ENCODE measurements at regions of chr1 and their contacts with region 1.

Region 1: DNA sequence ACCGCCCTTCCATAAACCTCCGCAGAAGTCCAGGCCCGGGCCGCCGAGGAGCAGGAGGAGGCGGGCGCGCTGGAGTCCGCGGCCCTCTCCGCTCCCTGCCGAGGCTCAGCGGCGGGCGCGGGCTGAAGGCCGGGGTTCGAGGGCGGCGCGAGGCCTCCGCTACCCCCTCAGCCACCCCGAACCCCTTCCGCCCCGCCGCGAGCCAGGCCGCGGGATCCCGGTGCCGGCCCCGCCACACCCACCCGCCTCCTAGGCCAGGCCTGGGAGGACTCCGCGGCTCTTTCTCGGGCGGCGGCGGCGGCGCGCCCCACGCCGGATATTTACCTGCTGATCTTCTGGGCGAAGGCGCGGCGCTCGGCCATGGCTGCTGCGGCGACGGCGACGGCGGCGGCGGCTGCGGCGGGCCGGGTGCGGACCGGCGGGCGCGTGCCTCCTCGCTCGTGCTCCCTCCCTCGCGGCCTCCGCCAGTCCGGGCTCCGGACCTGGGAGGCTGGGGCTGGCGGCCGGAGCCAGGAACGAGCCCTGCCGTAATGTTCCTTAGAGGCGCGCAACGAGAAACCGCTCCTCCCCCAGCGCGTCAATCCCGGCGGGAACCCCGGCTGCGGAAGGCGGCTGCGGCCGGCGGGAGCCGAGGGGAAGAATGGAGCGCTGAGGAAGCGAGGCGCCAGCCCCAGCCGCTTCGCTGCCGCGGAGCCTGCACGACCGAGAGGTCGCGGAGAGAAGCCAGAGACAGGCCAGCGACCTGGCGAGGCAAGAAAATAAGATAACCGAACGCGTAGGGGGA is at the start of gene DOCK7:
- DNase-seq: peak; percentile 64
- H3K4me3 ChIP-seq: peak within 1 kb of the TSS; percentile 89 to 91
- H3K27ac ChIP-seq: peak within 1 kb of the TSS; percentile 86 to 87
- H3K4me1 ChIP-seq: peaks cover 6% of the 10 kb centered on the region
- H3K27me3 ChIP-seq: no peaks in the 10 kb centered on the region
- CTCF ChIP-seq: no peak
- POLR2A ChIP-seq: peak; percentile 21
- total RNA-seq, gene DOCK7: 43.4 to 56.4 TPM

Region 2: GRCh38 chr1:62484824-62485468 is 203.1 kb before region 1 on chr1:
- intact Hi-C with region 1: no loop called
- DNase-seq: no peak
- H3K4me3 ChIP-seq: no peak overlapping the region
- H3K27ac ChIP-seq: no peak overlapping the region
- H3K4me1 ChIP-seq: no peaks in the 10 kb centered on the region
- H3K27me3 ChIP-seq: no peaks in the 10 kb centered on the region
- CTCF ChIP-seq: no peak
- POLR2A ChIP-seq: no peak

Region 3: DNA sequence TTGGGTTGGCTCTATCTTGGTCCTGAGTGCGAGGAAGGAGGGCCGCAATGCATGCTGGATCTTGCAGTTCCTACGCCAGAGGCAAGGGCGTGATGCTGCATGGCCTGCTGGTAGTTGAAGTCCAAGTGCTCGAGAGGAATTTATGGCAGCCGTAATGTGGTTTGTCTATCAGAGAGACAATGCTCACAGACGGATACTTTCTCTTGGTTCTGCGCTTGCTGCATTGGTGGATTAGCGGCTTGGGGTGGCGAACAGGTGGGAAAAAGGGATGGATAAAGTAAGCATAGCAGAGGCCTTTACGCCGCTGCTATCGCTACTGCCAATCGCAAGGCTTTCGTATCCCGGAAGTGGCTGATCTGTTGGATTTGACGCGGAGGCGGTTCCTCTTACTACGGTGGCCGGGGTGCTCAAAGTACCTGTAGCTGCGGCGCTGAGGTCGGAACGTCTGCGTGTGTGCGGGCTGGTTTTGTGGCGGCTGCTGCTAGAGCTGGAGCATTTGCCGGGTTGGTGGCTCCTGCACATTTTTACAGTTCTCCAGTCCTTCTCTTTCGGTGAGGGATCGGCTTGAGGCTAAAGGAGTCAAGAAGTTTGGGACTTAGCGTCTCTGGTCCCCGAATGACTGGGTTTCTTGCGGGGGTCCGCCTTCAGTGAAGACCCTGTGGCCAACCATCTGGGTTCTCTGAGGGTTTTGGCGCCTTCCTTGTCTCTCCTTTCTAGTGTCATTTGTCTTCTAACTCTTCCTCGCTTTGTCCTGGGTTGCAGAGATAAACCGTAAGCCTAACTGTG is 95.8 kb after region 1 on chr1 and contains the start of gene ATG4C:
- intact Hi-C with region 1: loop called (anchors 5 kb)
- DNase-seq: peak; percentile 98
- H3K4me3 ChIP-seq: peak within 1 kb of the TSS; percentile 72
- H3K27ac ChIP-seq: peak within 1 kb of the TSS; percentile 86 to 89
- H3K4me1 ChIP-seq: no peaks in the 10 kb centered on the region
- H3K27me3 ChIP-seq: no peaks in the 10 kb centered on the region
- CTCF ChIP-seq: peak in 2 of 4 experiments; percentile 2 to 10
- POLR2A ChIP-seq: peak; percentile 28
- total RNA-seq, gene ATG4C: 5.6 to 11.8 TPM

Measured in prostate gland (tissue), 2 donors.